ENCODE measurements at regions of chr16 and their contacts with region 1.

Region 1: GRCh38 chr16:58129097-58129936 is at the start of gene CFAP20:
- DNase-seq: peak; percentile 94 to 98 (median 97)
- H3K4me3 ChIP-seq: peak within 1 kb of the TSS; percentile 65 to 99 (median 89)
- H3K27ac ChIP-seq: peak within 1 kb of the TSS; percentile 3 to 97 (median 90)
- H3K27me3 ChIP-seq: no peaks in the 10 kb centered on the region
- CTCF ChIP-seq: peak in 38 of 56 donors; percentile 6 to 62 (median 27)
- total RNA-seq, gene CFAP20: 18.4 to 55.9 (median 42.9) TPM

Region 2: DNA sequence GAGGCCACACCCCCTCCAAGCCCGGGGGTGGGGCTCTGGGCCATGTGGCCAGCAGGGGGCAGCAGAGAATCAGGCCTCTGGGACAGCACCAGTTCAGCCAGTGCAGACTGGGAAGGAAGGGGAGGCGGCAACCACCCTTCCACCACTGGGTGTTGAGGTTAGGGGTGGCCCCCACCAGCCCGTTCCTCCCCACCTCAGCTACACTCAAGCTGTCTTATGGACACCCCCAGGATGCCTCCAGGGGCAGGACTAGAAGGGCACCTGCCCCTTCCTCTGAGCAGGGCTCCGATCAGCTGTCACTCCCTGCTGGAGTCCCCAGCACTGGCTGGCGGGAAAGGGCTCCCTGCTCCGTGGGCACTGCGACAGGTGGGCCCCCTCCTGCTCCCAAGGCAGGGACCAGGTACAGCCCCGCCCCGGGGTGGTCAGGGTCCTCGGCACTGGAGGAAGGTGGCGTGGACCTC is 372.0 kb before region 1 on chr16:
- intact Hi-C with region 1: loop called in 1 of 2 experiments (anchors 5 kb)
- DNase-seq: peak; percentile 76 to 90 (median 84)
- H3K4me3 ChIP-seq: no peak overlapping the region
- H3K27ac ChIP-seq: peak overlapping the region in 37 of 59 donors; percentile 5 to 85 (median 52)
- H3K27me3 ChIP-seq: no peaks in the 10 kb centered on the region
- CTCF ChIP-seq: peak; percentile 68 to 99 (median 96)

Region 3: DNA sequence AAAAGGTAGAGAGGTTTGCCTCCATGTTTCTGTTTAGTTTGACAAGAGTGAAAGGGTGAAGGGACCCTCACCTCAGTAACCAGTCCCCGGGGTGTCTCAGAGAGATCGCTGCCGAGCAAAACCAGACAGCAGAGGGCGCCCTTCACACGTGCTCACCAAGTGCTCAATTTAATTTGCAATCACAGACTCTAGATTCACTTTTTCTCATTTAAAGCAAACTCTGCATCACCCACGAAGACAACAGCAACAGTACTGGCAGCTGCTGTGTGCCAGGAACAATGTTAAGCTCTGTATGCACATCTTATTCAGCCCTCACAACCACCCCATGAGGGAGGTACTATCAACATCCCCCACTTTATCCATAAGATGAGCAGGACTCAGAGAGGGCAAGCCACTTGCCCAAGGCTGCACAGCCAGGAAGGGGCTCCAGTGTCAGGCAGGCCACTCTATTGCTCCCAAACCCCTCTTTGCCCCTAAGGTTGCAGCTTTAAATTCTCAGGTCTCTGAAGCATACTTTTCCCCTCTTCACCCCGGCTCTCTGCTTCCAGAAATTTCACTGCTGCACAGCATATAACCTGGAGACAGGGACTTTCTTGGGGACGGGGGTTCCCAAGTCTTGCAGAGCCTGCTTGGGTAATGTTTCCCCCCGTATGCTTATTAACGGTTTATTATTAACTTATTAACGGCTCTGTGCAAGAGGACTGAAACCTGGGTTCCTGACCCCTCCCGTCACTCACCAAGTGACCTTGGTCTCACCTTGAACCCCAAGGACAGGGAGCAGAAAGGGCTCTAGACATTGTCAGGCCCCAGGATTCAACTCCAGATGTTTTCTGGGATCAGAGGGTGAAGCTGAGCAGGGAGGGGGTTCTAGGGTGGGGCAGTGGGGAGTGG is 229.3 kb before region 1 on chr16:
- intact Hi-C with region 1: loop called (anchors 5 to 10 kb)
- DNase-seq: peak; percentile 51 to 87 (median 75)
- H3K4me3 ChIP-seq: no peak overlapping the region
- H3K27ac ChIP-seq: no peak overlapping the region
- H3K27me3 ChIP-seq: peaks cover 0 to 4% (median 0%) of the 10 kb centered on the region in 45 donors
- CTCF ChIP-seq: peak; percentile 64 to 97 (median 91)

Region 4: GRCh38 chr16:58025351-58026138 is 103.8 kb before region 1 on chr16 and contains the start of gene MMP15:
- intact Hi-C with region 1: loop called (anchors 2 to 5 kb)
- DNase-seq: peak in 6 of 10 donors; percentile 36 to 76 (median 59)
- H3K4me3 ChIP-seq: peak within 1 kb of the TSS; percentile 45 to 82 (median 68)
- H3K27ac ChIP-seq: peak within 1 kb of the TSS in 34 of 59 donors; percentile 3 to 81 (median 52)
- H3K27me3 ChIP-seq: peaks cover 0 to 6% (median 0%) of the 10 kb centered on the region in 45 donors
- CTCF ChIP-seq: peak in 2 of 56 donors; percentile 3 to 9
- total RNA-seq, gene MMP15: 4.7 to 17.4 (median 8.2) TPM

Region 5: GRCh38 chr16:58086426-58087208 is 42.7 kb before region 1 on chr16:
- intact Hi-C with region 1: no loop called
- DNase-seq: no peak
- H3K4me3 ChIP-seq: no peak overlapping the region
- H3K27ac ChIP-seq: no peak overlapping the region
- H3K27me3 ChIP-seq: no peaks in the 10 kb centered on the region
- CTCF ChIP-seq: no peak

Region 6: GRCh38 chr16:58399718-58400633 is 270.7 kb after region 1 on chr16:
- intact Hi-C with region 1: no loop called
- DNase-seq: no peak
- H3K4me3 ChIP-seq: no peak overlapping the region
- H3K27ac ChIP-seq: no peak overlapping the region
- H3K27me3 ChIP-seq: no peaks in the 10 kb centered on the region
- CTCF ChIP-seq: no peak

Region 7: GRCh38 chr16:58494981-58495520 is 365.7 kb after region 1 on chr16:
- intact Hi-C with region 1: loop called in 1 of 2 experiments (anchors 10 kb)
- DNase-seq: peak in 9 of 10 donors; percentile 78 to 97 (median 89)
- H3K4me3 ChIP-seq: peak overlapping the region in 58 of 59 donors; percentile 5 to 64 (median 44)
- H3K27ac ChIP-seq: peak overlapping the region; percentile 81 to 100 (median 97)
- H3K27me3 ChIP-seq: no peaks in the 10 kb centered on the region
- CTCF ChIP-seq: peak in 55 of 56 donors; percentile 41 to 78 (median 66)